ENCODE measurements at regions of chr3 and their contacts with region 1.

Region 1: GRCh38 chr3:38227989-38228388 is 37.6 kb upstream of the SLC22A13 start:
- DNase-seq: no peak
- ATAC-seq: no peak
- H3K4me3 ChIP-seq: no peak overlapping the region
- H3K4me3 Mint-ChIP-seq: no peak overlapping the region
- H3K27ac ChIP-seq: no peak overlapping the region
- H3K27ac Mint-ChIP-seq: no peak overlapping the region
- H3K4me1 ChIP-seq: no peaks in the 10 kb centered on the region
- H3K4me1 Mint-ChIP-seq: no peaks in the 10 kb centered on the region
- H3K27me3 ChIP-seq: no peaks in the 10 kb centered on the region
- H3K27me3 Mint-ChIP-seq: no peaks in the 10 kb centered on the region
- CTCF ChIP-seq: no peak

Region 2: GRCh38 chr3:37096975-37097374 is 1131.0 kb before region 1 on chr3:
- CTCF ChIA-PET with region 1: no interaction called
- POLR2A ChIA-PET with region 1: no interaction called
- intact Hi-C with region 1: no loop called
- DNase-seq: no peak
- ATAC-seq: no peak
- H3K4me3 ChIP-seq: no peak overlapping the region
- H3K4me3 Mint-ChIP-seq: no peak overlapping the region
- H3K27ac ChIP-seq: no peak overlapping the region
- H3K27ac Mint-ChIP-seq: peak overlapping the region; percentile 60
- H3K4me1 ChIP-seq: no peaks in the 10 kb centered on the region
- H3K4me1 Mint-ChIP-seq: no peaks in the 10 kb centered on the region
- H3K27me3 ChIP-seq: no peaks in the 10 kb centered on the region
- H3K27me3 Mint-ChIP-seq: no peaks in the 10 kb centered on the region
- CTCF ChIP-seq: no peak

Region 3: DNA sequence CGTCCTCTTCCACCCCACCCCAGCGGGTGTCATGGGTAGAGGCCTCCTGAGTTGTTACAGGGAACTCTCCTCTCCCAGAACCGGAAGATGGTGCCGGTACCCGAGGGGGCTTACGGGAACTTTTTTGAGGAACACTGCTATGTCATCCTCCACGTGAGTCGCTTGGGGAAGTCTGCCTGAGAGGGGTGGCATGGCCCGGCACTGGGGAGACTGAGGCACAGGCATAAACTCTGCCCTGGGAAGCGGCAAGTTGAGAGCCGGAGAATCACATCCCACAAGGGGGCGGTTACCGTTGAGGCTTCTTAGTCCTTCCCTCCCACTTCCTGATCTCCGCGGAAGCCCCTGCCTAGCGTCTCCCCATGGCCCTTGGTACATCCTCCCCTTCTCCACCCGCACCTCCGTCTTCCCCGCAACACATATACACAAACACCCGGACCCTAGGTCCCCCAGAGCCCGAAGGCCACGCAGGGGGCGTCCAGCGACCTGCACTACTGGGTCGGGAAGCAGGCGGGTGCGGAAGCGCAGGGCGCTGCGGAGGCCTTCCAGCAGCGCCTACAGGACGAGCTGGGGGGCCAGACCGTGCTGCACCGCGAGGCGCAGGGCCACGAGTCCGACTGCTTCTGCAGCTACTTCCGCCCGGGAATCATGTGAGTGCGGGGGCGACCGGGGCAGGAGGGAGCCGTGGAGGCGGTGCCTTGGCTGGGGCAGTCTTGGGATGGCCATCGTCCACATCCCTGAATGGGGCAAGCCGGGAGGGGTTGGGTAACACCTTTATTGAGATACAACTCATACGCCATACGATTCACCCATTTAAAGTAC is 234.0 kb before region 1 on chr3:
- CTCF ChIA-PET with region 1: no interaction called
- POLR2A ChIA-PET with region 1: no interaction called
- intact Hi-C with region 1: no loop called
- DNase-seq: peak; percentile 23 to 76 (median 44)
- ATAC-seq: peak; percentile 53
- H3K4me3 ChIP-seq: peak overlapping the region; percentile 69
- H3K4me3 Mint-ChIP-seq: peak overlapping the region; percentile 97
- H3K27ac ChIP-seq: peak overlapping the region; percentile 67 to 69
- H3K27ac Mint-ChIP-seq: peak overlapping the region; percentile 95
- H3K4me1 ChIP-seq: peaks cover 53% of the 10 kb centered on the region
- H3K4me1 Mint-ChIP-seq: peaks cover 57% of the 10 kb centered on the region
- H3K27me3 ChIP-seq: no peaks in the 10 kb centered on the region
- H3K27me3 Mint-ChIP-seq: no peaks in the 10 kb centered on the region
- CTCF ChIP-seq: no peak

Region 4: GRCh38 chr3:38131621-38132369 is 96.2 kb before region 1 on chr3:
- CTCF ChIA-PET with region 1: no interaction called
- POLR2A ChIA-PET with region 1: no interaction called
- intact Hi-C with region 1: loop called in 1 of 2 experiments (anchors 5 kb)
- DNase-seq: peak in 6 of 14 experiments; percentile 23 to 60 (median 43)
- ATAC-seq: no peak
- H3K4me3 ChIP-seq: no peak overlapping the region
- H3K4me3 Mint-ChIP-seq: no peak overlapping the region
- H3K27ac ChIP-seq: no peak overlapping the region
- H3K27ac Mint-ChIP-seq: peak overlapping the region; percentile 63
- H3K4me1 ChIP-seq: peaks cover 46% of the 10 kb centered on the region
- H3K4me1 Mint-ChIP-seq: peaks cover 51% of the 10 kb centered on the region
- H3K27me3 ChIP-seq: no peaks in the 10 kb centered on the region
- H3K27me3 Mint-ChIP-seq: no peaks in the 10 kb centered on the region
- CTCF ChIP-seq: peak; percentile 28

Region 5: GRCh38 chr3:38334142-38335055 is 106.4 kb after region 1 on chr3:
- CTCF ChIA-PET with region 1: no interaction called
- POLR2A ChIA-PET with region 1: no interaction called
- intact Hi-C with region 1: no loop called
- DNase-seq: no peak
- ATAC-seq: no peak
- H3K4me3 ChIP-seq: no peak overlapping the region
- H3K4me3 Mint-ChIP-seq: no peak overlapping the region
- H3K27ac ChIP-seq: no peak overlapping the region
- H3K27ac Mint-ChIP-seq: no peak overlapping the region
- H3K4me1 ChIP-seq: no peaks in the 10 kb centered on the region
- H3K4me1 Mint-ChIP-seq: no peaks in the 10 kb centered on the region
- H3K27me3 ChIP-seq: no peaks in the 10 kb centered on the region
- H3K27me3 Mint-ChIP-seq: no peaks in the 10 kb centered on the region
- CTCF ChIP-seq: no peak

Region 6: GRCh38 chr3:38730281-38730680 is 502.3 kb after region 1 on chr3:
- CTCF ChIA-PET with region 1: no interaction called
- POLR2A ChIA-PET with region 1: no interaction called
- intact Hi-C with region 1: no loop called
- DNase-seq: no peak
- ATAC-seq: no peak
- H3K4me3 ChIP-seq: no peak overlapping the region
- H3K4me3 Mint-ChIP-seq: no peak overlapping the region
- H3K27ac ChIP-seq: no peak overlapping the region
- H3K27ac Mint-ChIP-seq: no peak overlapping the region
- H3K4me1 ChIP-seq: no peaks in the 10 kb centered on the region
- H3K4me1 Mint-ChIP-seq: no peaks in the 10 kb centered on the region
- H3K27me3 ChIP-seq: peaks cover 4% of the 10 kb centered on the region in 2 experiments
- H3K27me3 Mint-ChIP-seq: peaks cover 23% of the 10 kb centered on the region
- CTCF ChIP-seq: no peak

Measured in CD4-positive, alpha-beta T cell (primary cell).